Posterior vena cava (tissue), 2 donors: ENCODE measurements at regions of chr17 and their contacts with region 1.

Region 1: DNA sequence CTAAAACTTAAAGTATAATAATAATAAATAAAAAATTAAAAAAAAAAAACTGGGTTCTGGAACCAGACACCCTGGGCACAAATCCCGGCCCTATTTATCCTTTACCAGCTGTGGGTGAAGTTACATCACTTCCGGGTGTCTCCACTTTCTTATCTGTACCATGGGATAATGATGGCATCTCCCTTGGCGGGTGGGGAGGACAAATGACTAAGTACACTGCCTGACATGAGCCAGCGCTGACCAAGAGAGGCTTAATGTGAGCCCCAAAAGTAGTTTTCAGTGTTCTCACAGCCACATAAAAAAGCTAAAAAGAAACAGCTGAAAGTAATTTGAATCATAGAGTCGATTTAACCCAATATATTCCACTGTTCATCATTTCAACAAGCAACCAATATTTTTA is 424.9 kb downstream of the SOX9 start:
- DNase-seq: no peak

Region 2: DNA sequence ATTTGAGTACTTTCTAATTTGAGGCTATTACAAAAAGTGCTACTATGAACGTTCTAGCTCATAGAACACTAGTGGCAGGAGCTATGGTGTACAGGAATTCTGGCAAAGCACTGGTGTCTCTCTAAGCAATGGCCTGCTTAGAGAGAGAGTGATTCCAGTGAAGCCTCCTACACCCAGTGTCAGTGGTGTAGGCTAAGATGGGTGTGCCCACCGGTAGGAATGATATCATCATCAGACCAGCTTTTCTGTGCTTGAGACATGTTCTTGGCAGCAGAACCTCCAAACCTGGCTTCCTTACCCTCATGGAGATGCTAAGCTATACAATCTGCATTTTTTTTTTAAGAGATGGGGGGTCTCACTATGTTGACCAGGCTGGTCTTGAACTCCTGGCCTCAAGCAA is 54.7 kb before region 1 on chr17:
- intact Hi-C with region 1: loop called in 1 of 2 experiments (anchors 2 kb)
- DNase-seq: no peak

Region 3: GRCh38 chr17:72764632-72765041 is 218.9 kb after region 1 on chr17:
- intact Hi-C with region 1: no loop called
- DNase-seq: no peak